Ascending aorta (tissue), 2 donors: ENCODE measurements at regions of chr11 and their contacts with region 1.

Region 1: DNA sequence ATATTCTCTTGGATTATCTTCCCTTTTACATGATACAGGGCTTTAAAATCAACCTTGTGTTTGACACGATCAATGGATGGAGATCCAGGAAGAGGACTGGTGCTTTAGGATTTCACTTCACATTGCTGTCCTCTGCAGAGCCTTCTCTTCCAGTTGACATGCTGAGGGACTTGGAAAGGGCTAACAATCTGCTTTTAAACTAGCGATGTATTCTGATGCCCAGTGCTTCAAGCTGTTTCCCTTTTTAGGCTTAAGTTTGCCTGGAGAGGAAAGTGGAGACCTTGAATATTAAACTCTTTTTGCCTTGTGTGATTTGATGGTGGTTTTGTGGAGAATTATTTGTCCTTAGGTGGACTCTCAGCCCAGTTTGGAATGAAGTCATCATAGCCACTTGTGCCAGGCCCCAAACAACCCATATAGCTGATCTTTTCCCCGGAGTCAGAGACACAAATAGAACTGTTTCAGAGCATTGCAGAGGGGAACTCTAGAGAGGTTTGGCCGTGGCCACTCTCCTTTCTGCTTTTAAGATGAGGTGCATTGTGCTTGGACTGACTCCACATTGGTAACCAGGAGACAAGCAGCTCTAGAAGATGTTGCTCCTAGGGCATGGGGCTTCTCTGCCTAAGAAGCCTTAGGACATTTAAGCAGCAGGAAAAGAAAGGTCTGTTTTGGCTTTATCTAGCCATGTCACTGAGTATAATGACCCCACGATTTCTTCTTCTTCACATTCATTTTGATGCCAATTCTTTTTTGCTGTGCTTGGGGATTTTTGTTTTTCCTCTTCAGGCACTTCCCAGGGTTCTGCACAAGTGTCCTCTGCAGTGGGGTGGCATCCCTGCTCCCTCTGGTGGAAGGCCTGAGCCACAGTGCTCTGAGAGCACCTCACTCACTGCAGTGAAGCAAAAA is 152.8 kb downstream of the NCAM1 start:
- DNase-seq: peak in 1 of 2 donors; percentile 79
- H3K4me3 ChIP-seq: peak overlapping the region in 1 of 2 donors; percentile 5
- H3K27ac ChIP-seq: peak overlapping the region; percentile 17 to 72
- H3K4me1 ChIP-seq: peaks cover 0 to 12% of the 10 kb centered on the region in 2 donors
- H3K27me3 ChIP-seq: no peaks in the 10 kb centered on the region
- CTCF ChIP-seq: peak; percentile 62 to 73 (median 69)

Region 2: GRCh38 chr11:112459001-112459400 is 655.1 kb before region 1 on chr11:
- intact Hi-C with region 1: no loop called
- DNase-seq: no peak
- H3K4me3 ChIP-seq: no peak overlapping the region
- H3K27ac ChIP-seq: no peak overlapping the region
- H3K4me1 ChIP-seq: no peaks in the 10 kb centered on the region
- H3K27me3 ChIP-seq: no peaks in the 10 kb centered on the region
- CTCF ChIP-seq: no peak

Region 3: GRCh38 chr11:113148652-113149051 is 34.6 kb after region 1 on chr11:
- intact Hi-C with region 1: no loop called
- DNase-seq: no peak
- H3K4me3 ChIP-seq: no peak overlapping the region
- H3K27ac ChIP-seq: no peak overlapping the region
- H3K4me1 ChIP-seq: no peaks in the 10 kb centered on the region
- H3K27me3 ChIP-seq: no peaks in the 10 kb centered on the region
- CTCF ChIP-seq: no peak

Region 4: GRCh38 chr11:113162592-113162962 is 48.5 kb after region 1 on chr11:
- intact Hi-C with region 1: loop called (anchors 5 kb)
- DNase-seq: peak in 1 of 2 donors; percentile 71
- H3K4me3 ChIP-seq: no peak overlapping the region
- H3K27ac ChIP-seq: peak overlapping the region; percentile 28 to 44
- H3K4me1 ChIP-seq: peaks cover 0 to 22% of the 10 kb centered on the region in 2 donors
- H3K27me3 ChIP-seq: no peaks in the 10 kb centered on the region
- CTCF ChIP-seq: peak in 1 of 3 experiments; percentile 53